ENCODE measurements at regions of chr18 and their contacts with region 1.

Region 1: GRCh38 chr18:839224-840022 is 27.4 kb upstream of the YES1 start:
- DNase-seq: peak; percentile 87 to 90
- ATAC-seq: peak; percentile 86 to 98 (median 88)
- H3K4me3 ChIP-seq: no peak overlapping the region
- H3K27ac ChIP-seq: no peak overlapping the region
- H3K4me1 ChIP-seq: no peaks in the 10 kb centered on the region
- H3K27me3 ChIP-seq: no peaks in the 10 kb centered on the region
- CTCF ChIP-seq: peak; percentile 97

Region 2: GRCh38 chr18:623761-624620 is 215.4 kb before region 1 on chr18:
- intact Hi-C with region 1: loop called (anchors 2 to 10 kb)
- DNase-seq: peak; percentile 44 to 61
- ATAC-seq: peak in 2 of 4 donors; percentile 41 to 56
- H3K4me3 ChIP-seq: no peak overlapping the region
- H3K27ac ChIP-seq: no peak overlapping the region
- H3K4me1 ChIP-seq: no peaks in the 10 kb centered on the region
- H3K27me3 ChIP-seq: peaks cover 0 to 4% (median 2%) of the 10 kb centered on the region in 3 donors
- CTCF ChIP-seq: peak; percentile 55

Region 3: DNA sequence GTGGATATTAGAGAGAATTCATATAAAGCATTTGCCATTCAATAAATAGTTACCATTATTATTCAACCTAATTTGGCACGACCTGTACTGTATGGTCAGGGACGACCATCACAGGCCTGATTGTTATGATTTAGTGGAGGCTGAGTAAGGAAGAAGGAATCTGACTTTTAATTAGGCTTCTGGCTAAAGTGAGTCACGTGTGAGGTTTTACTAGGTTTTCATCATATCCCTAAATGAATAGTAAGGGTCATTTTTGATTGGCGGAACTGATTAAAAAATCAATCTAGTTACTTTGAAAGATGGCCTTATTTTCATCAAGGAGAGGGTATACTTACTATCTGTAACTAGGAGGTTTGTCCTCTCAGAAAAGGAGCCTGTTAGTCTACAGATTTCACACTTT is 208.6 kb after region 1 on chr18:
- intact Hi-C with region 1: no loop called
- DNase-seq: no peak
- ATAC-seq: no peak
- H3K4me3 ChIP-seq: no peak overlapping the region
- H3K27ac ChIP-seq: no peak overlapping the region
- H3K4me1 ChIP-seq: no peaks in the 10 kb centered on the region
- H3K27me3 ChIP-seq: no peaks in the 10 kb centered on the region
- CTCF ChIP-seq: no peak